Mammary epithelial cell (primary cell): ENCODE measurements at regions of chr2 and their contacts with region 1.

Region 1: GRCh38 chr2:227132986-227133385 is 31.0 kb downstream of the COL4A4 start:
- DNase-seq: no peak
- H3K4me3 ChIP-seq: no peak overlapping the region
- H3K27ac ChIP-seq: no peak overlapping the region
- H3K4me1 ChIP-seq: no peaks in the 10 kb centered on the region
- H3K27me3 ChIP-seq: no peaks in the 10 kb centered on the region
- CTCF ChIP-seq: no peak

Region 2: DNA sequence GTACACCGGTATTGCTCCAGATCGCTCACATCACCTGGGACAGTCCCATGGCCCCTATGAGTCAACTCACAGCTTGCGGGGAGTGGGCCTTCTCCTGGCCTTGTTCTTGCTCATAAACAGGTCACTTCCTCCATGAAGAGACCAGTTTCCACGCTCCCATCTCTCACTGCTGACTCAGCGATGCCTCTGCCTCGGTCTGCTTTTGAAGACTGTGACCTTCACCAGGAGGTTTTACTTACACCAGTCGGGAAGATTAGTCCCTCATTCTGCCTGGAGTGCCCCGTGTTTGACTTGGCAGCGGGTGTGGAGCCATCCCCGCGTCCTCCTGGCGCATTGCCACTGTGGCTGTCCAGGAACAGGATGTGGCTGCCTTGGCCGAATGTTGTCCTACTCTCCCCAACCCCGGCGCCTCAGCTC is 137.4 kb before region 1 on chr2:
- CTCF ChIA-PET with region 1: no interaction called
- dilution Hi-C with region 1: no loop called
- in situ Hi-C with region 1: no loop called
- intact Hi-C with region 1: no loop called
- DNase-seq: peak; percentile 6
- H3K4me3 ChIP-seq: no peak overlapping the region
- H3K27ac ChIP-seq: no peak overlapping the region
- H3K4me1 ChIP-seq: no peaks in the 10 kb centered on the region
- H3K27me3 ChIP-seq: no peaks in the 10 kb centered on the region
- CTCF ChIP-seq: no peak

Region 3: DNA sequence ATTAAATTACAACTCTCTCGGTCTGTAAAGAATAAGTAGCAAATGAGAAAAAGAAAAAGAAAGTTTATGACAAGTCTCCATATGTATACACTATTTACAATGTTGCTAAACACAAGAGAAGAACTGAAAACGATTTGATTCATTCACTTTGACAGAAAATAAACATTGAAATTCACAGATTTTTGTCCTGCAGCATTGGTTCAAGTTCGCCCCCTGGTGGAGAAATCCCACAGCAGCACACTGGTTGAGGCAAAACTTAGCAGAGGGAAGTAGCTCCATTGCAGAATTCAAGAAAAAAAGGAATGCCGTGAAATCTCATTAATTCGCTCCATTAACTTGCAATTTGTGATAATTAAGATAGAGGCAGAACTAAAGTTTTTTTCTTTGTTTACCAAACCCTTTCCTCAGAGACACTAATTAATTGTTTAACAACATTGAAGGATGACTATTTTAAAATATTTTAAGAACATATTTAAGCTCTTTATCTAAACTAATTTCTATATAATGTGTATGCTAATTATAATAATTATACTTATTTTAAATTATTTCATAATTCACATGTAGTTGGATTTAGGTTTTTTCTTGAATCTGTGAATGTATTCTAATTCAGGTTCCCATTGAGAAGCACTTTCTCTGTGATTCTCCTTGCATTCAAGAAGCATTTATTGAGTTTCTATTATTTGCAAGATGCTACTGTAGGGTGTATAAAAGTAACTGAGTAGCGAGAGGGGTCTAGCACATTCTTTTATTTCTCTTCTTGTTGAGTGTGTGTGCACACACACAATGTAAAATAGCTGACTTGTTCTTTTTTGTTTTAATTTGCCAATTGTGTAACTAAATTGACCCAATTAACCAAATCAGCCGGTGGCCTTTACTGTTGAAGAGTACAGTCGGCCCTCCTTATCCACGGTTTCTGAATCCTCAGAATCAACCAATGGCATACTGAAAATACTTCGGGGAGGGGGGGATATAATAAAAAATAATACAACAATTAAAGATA is 105.6 kb after region 1 on chr2:
- CTCF ChIA-PET with region 1: no interaction called
- dilution Hi-C with region 1: no loop called
- in situ Hi-C with region 1: loop called (anchors 5 to 10 kb)
- intact Hi-C with region 1: loop called (anchors 1 kb)
- DNase-seq: peak; percentile 26
- H3K4me3 ChIP-seq: no peak overlapping the region
- H3K27ac ChIP-seq: no peak overlapping the region
- H3K4me1 ChIP-seq: no peaks in the 10 kb centered on the region
- H3K27me3 ChIP-seq: no peaks in the 10 kb centered on the region
- CTCF ChIP-seq: peak; percentile 96 to 99

Region 4: DNA sequence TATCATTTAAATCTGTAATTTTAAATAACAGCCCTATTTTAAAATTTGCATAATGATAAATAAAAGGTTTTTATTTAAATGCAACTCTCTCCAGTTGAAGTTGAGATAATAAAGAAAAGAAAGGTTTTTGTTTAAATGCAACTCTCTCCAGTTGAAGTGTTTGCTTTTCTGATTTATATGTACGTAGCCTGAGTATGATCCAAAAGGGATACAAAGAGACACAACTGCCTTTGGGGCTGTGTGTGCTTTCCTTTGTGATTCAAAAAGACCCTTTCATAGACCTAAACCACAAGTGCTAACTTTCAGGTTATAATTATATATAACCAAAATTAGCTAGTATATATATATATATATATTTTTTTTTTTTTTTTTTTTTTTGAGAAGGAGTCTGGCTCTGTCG is 115.9 kb after region 1 on chr2:
- CTCF ChIA-PET with region 1: no interaction called
- dilution Hi-C with region 1: no loop called
- in situ Hi-C with region 1: loop called (anchors 5 to 10 kb)
- intact Hi-C with region 1: no loop called
- DNase-seq: no peak
- H3K4me3 ChIP-seq: no peak overlapping the region
- H3K27ac ChIP-seq: no peak overlapping the region
- H3K4me1 ChIP-seq: no peaks in the 10 kb centered on the region
- H3K27me3 ChIP-seq: no peaks in the 10 kb centered on the region
- CTCF ChIP-seq: no peak

Region 5: DNA sequence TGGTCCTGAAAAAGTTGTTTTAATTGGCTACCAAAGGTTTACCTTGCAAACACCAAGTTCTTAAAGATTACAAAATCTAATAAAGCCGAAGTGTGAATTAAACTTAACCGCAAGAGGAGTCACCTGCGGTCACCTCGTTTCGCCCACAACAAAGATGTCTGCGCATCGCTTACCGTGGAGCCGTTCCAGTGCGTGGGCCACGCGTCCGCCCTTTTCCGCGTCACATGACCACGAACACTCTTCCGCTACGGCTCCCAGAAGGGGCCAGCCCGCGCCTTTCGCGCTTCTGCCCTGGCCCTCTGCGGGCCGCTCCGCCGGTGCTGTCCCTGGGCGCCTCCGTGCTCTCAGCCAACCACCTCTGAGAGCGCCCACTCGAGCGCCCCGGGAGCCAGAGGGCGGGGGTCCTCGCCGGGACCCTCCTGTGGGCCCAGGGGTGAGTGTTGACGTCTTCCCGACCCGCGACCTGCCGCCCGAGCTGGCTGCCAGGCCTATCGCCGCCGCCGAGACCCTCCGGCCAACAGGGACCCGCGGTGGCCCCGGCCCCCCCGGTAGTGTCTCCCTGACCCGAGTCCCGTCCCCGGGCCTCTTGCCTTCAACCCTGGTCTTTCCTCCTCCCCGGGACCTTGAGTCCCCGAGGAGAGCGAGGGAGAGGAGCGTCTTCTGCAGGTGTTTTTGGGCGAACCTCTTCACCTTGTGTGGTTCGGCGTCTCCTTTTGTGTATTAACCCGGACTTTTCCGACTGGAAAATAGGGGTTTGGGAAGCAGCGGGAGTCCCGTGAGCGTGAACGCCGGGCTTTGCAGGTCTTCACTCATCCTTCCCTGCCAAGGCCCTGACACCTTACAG is 192.2 kb after region 1 on chr2 and contains the start of gene MFF:
- CTCF ChIA-PET with region 1: no interaction called
- dilution Hi-C with region 1: no loop called
- in situ Hi-C with region 1: no loop called
- intact Hi-C with region 1: loop called (anchors 1 kb)
- DNase-seq: peak; percentile 91
- H3K4me3 ChIP-seq: peak within 1 kb of the TSS; percentile 69 to 89 (median 77)
- H3K27ac ChIP-seq: peak within 1 kb of the TSS; percentile 78
- H3K4me1 ChIP-seq: peaks cover 12% of the 10 kb centered on the region
- H3K27me3 ChIP-seq: no peaks in the 10 kb centered on the region
- CTCF ChIP-seq: peak; percentile 11 to 53
- total RNA-seq, gene MFF: 44.2 to 56.0 TPM

Region 6: GRCh38 chr2:227406177-227407031 is 273.4 kb after region 1 on chr2:
- CTCF ChIA-PET with region 1: interaction called, 4 read pairs
- dilution Hi-C with region 1: no loop called
- in situ Hi-C with region 1: no loop called
- intact Hi-C with region 1: loop called (anchors 5 kb)
- DNase-seq: peak; percentile 95
- H3K4me3 ChIP-seq: no peak overlapping the region
- H3K27ac ChIP-seq: peak overlapping the region; percentile 87
- H3K4me1 ChIP-seq: peaks cover 20% of the 10 kb centered on the region
- H3K27me3 ChIP-seq: no peaks in the 10 kb centered on the region
- CTCF ChIP-seq: peak; percentile 82 to 83

Region 7: GRCh38 chr2:227655454-227655853 is 522.5 kb after region 1 on chr2:
- CTCF ChIA-PET with region 1: no interaction called
- dilution Hi-C with region 1: no loop called
- in situ Hi-C with region 1: no loop called
- intact Hi-C with region 1: loop called (anchors 5 kb)
- DNase-seq: peak; percentile 82
- H3K4me3 ChIP-seq: no peak overlapping the region
- H3K27ac ChIP-seq: no peak overlapping the region
- H3K4me1 ChIP-seq: peaks cover 13% of the 10 kb centered on the region
- H3K27me3 ChIP-seq: no peaks in the 10 kb centered on the region
- CTCF ChIP-seq: no peak

Region 8: DNA sequence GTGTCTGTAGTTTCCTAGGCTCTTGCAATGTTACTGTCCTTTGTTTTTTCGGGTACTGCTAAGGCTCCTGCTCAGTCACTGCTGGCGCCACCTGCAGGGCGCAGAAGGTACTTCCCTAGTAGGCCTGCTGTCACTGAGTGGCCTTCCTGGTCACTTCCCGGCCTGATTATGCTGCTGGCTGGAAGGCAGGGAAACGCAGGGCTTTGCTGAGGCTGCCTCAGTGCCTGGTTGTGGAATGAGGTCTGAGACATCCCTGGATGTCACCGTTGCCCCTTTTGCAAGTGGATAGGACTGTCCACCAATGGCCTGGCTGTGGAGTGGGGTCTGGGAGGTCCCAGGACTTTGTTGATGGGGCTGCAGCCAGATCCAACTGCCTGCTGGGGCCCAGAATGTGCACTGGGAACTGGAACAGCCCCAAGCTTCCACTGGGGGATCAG is 751.5 kb after region 1 on chr2:
- CTCF ChIA-PET with region 1: no interaction called
- dilution Hi-C with region 1: no loop called
- in situ Hi-C with region 1: no loop called
- intact Hi-C with region 1: loop called (anchors 5 kb)
- DNase-seq: peak; percentile 58
- H3K4me3 ChIP-seq: no peak overlapping the region
- H3K27ac ChIP-seq: no peak overlapping the region
- H3K4me1 ChIP-seq: peaks cover 7% of the 10 kb centered on the region
- H3K27me3 ChIP-seq: no peaks in the 10 kb centered on the region
- CTCF ChIP-seq: peak; percentile 90 to 98